ENCODE measurements at regions of chr11 and their contacts with region 1.

Region 1: GRCh38 chr11:19660076-19660475 is 52.6 kb upstream of the NAV2 start:
- DNase-seq: no peak

Region 2: DNA sequence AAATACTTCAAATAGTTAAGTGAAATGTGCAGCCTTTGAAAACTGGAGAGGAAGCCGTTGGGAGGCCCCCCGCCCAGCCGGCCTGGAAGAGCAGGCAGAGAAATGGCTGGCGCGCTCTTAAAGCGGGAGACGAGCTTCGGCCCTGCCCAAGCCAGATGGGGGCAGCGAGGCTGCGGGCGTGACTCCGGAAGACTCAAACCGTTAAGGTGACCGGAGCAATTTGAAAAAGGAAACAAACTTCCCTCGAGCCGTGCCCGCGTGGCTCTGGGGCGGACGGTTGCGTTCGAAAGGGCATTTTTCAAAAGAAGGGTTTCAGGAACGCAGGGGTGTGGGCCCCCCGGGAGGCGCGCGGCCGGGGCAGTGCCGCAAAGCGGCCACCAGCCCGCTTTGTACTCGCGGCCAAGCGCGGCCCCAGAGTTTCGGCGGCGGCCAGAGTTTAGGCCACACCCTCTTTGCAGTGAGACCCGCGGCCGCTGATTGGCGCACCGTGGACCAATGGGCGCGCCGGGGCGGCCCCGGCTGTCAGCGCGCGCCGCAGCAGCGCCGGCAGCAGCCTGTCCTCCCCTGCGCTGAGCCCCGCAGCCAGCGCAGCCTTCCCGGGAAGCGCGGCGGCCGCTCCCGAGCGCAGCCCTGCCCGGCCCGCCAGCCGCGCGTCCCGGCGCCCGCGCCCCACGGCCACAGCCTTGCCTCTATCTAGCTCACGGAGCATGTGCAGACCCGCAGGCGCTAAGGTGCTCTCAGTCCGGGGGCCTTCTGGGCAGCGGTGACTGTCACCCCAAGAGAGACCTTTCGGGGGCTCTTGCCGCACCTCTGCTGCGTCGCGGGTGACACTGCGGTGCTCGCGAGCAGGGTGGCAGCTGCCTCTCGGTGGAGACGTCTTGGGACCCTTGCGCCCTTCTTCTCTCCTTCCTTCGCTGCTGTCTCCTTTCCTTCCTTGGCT is 52.5 kb after region 1 on chr11 and contains the start of gene NAV2:
- intact Hi-C with region 1: loop called (anchors 5 kb)
- DNase-seq: peak; percentile 88 to 99 (median 94)

Region 3: GRCh38 chr11:20110908-20111669 is 451.0 kb after region 1 on chr11:
- intact Hi-C with region 1: loop called (anchors 10 kb)
- DNase-seq: peak in 2 of 10 donors; percentile 24 to 79

Measured in posterior cingulate gyrus (tissue), 11 donors.